ENCODE measurements at regions of chr2 and their contacts with region 1.

Region 1: GRCh38 chr2:234500394-234501006 is 3.6 kb upstream of the ARL4C start:
- DNase-seq: peak; percentile 65
- ATAC-seq: peak; percentile 27
- H3K4me3 ChIP-seq: no peak overlapping the region
- H3K27ac ChIP-seq: no peak overlapping the region
- H3K4me1 ChIP-seq: peaks cover 4% of the 10 kb centered on the region
- H3K27me3 ChIP-seq: no peaks in the 10 kb centered on the region
- CTCF ChIP-seq: peak; percentile 75
- POLR2A ChIP-seq: no peak
- RAD21 ChIP-seq: peak; percentile 90

Region 2: GRCh38 chr2:233976690-233977294 is 523.7 kb before region 1 on chr2:
- CTCF ChIA-PET with region 1: interaction called, 4 read pairs
- POLR2A ChIA-PET with region 1: no interaction called
- dilution Hi-C with region 1: no loop called
- in situ Hi-C with region 1: no loop called
- intact Hi-C with region 1: loop called (anchors 1 kb)
- DNase-seq: peak; percentile 76
- ATAC-seq: peak; percentile 59
- H3K4me3 ChIP-seq: no peak overlapping the region
- H3K27ac ChIP-seq: no peak overlapping the region
- H3K4me1 ChIP-seq: peaks cover 14% of the 10 kb centered on the region
- H3K27me3 ChIP-seq: no peaks in the 10 kb centered on the region
- CTCF ChIP-seq: peak; percentile 77
- POLR2A ChIP-seq: no peak
- RAD21 ChIP-seq: peak; percentile 87

Region 3: GRCh38 chr2:233982421-233983121 is 517.9 kb before region 1 on chr2:
- CTCF ChIA-PET with region 1: interaction called, 3 read pairs
- POLR2A ChIA-PET with region 1: no interaction called
- dilution Hi-C with region 1: no loop called
- in situ Hi-C with region 1: no loop called
- intact Hi-C with region 1: loop called (anchors 1 kb)
- DNase-seq: peak; percentile 94
- ATAC-seq: peak; percentile 92
- H3K4me3 ChIP-seq: no peak overlapping the region
- H3K27ac ChIP-seq: peak overlapping the region; percentile 65
- H3K4me1 ChIP-seq: peaks cover 7% of the 10 kb centered on the region
- H3K27me3 ChIP-seq: no peaks in the 10 kb centered on the region
- CTCF ChIP-seq: no peak
- POLR2A ChIP-seq: no peak
- RAD21 ChIP-seq: peak; percentile 24; the same call in 1 of the 2 replicates

Region 4: DNA sequence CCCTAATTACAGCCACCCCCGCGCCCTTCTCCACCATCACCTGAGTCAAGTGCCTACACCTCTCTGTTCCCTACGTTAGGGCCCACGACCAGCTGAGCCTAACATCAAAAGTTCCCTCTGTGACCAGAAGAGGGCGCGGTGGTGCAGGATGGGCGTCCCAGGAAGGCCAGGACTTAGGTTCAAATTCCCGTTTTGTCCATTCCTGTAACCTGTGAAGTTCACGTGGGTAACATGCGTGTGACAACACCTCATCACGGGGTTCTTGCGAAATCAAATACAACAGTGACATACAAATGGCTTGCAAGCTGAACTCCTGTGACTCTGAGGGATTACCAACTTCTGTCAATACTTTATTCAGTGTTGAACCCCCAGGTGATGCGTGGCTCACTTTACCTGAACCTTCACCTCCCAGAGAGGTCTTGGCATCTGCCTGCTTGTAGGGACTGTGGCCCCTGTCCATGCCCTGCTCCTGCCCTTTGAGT is 211.5 kb before region 1 on chr2:
- CTCF ChIA-PET with region 1: interaction called, 3 read pairs
- POLR2A ChIA-PET with region 1: interaction called, 3 read pairs
- dilution Hi-C with region 1: no loop called
- in situ Hi-C with region 1: loop called (anchors 10 kb)
- intact Hi-C with region 1: loop called (anchors 1 kb)
- DNase-seq: peak; percentile 41
- ATAC-seq: no peak
- H3K4me3 ChIP-seq: no peak overlapping the region
- H3K27ac ChIP-seq: no peak overlapping the region
- H3K4me1 ChIP-seq: peaks cover 18% of the 10 kb centered on the region
- H3K27me3 ChIP-seq: no peaks in the 10 kb centered on the region
- CTCF ChIP-seq: peak; percentile 65
- POLR2A ChIP-seq: no peak
- RAD21 ChIP-seq: peak; percentile 71

Region 5: GRCh38 chr2:234335661-234336228 is 164.8 kb before region 1 on chr2:
- CTCF ChIA-PET with region 1: no interaction called
- POLR2A ChIA-PET with region 1: no interaction called
- dilution Hi-C with region 1: loop called (anchors 25 kb)
- in situ Hi-C with region 1: no loop called
- intact Hi-C with region 1: no loop called
- DNase-seq: peak; percentile 72
- ATAC-seq: peak; percentile 92
- H3K4me3 ChIP-seq: no peak overlapping the region
- H3K27ac ChIP-seq: no peak overlapping the region
- H3K4me1 ChIP-seq: no peaks in the 10 kb centered on the region
- H3K27me3 ChIP-seq: peaks cover 22% of the 10 kb centered on the region
- CTCF ChIP-seq: no peak
- POLR2A ChIP-seq: no peak
- RAD21 ChIP-seq: 0 out of 2 replicates have a peak, but pooled peaks have one; percentile 5

Region 6: GRCh38 chr2:234368861-234369261 is 131.6 kb before region 1 on chr2:
- CTCF ChIA-PET with region 1: no interaction called
- POLR2A ChIA-PET with region 1: no interaction called
- dilution Hi-C with region 1: no loop called
- in situ Hi-C with region 1: no loop called
- intact Hi-C with region 1: loop called (anchors 10 kb)
- DNase-seq: peak; percentile 28
- ATAC-seq: peak; percentile 75
- H3K4me3 ChIP-seq: no peak overlapping the region
- H3K27ac ChIP-seq: no peak overlapping the region
- H3K4me1 ChIP-seq: no peaks in the 10 kb centered on the region
- H3K27me3 ChIP-seq: peaks cover 2% of the 10 kb centered on the region; the same call in 1 of the 2 replicates
- CTCF ChIP-seq: no peak
- POLR2A ChIP-seq: no peak
- RAD21 ChIP-seq: no peak

Region 7: GRCh38 chr2:234514873-234515638 is 14.6 kb after region 1 on chr2:
- CTCF ChIA-PET with region 1: no interaction called
- POLR2A ChIA-PET with region 1: no interaction called
- dilution Hi-C with region 1: no loop called
- in situ Hi-C with region 1: no loop called
- intact Hi-C with region 1: no loop called
- DNase-seq: no peak
- ATAC-seq: no peak
- H3K4me3 ChIP-seq: no peak overlapping the region
- H3K27ac ChIP-seq: no peak overlapping the region
- H3K4me1 ChIP-seq: peaks cover 3% of the 10 kb centered on the region; the same call in 1 of the 2 replicates
- H3K27me3 ChIP-seq: peaks cover 6% of the 10 kb centered on the region
- CTCF ChIP-seq: no peak
- POLR2A ChIP-seq: no peak
- RAD21 ChIP-seq: no peak

Region 8: DNA sequence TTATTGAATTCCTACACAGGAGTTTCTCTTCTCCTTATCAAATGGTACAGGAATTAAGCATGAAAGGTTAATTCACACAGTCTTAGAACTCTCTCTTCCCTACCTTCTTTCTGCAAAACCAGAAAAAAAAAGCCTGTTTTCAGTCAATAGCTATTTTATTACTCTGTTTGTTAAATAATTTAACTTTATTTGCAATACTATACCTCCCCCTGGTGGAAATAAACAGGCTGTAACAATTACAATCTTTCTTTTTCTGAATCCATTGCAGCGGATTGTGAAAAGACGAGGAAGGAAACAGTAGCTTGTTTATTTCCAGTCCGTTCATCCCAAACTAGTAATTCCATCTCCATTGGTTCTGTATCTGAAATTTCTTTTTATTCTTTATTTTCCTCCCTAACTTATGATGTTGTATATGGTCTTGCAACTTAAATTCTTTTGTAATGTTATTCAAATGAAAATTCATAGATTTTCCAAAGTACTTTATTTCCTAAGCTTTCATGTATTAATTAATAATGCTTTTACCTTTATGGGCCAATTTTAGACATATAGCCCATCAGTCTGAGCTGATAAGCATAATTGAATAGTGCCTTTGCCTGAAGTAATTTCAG is 616.5 kb after region 1 on chr2:
- CTCF ChIA-PET with region 1: no interaction called
- POLR2A ChIA-PET with region 1: no interaction called
- dilution Hi-C with region 1: no loop called
- in situ Hi-C with region 1: no loop called
- intact Hi-C with region 1: loop called (anchors 2 kb)
- DNase-seq: peak; percentile 48
- ATAC-seq: peak; percentile 69
- H3K4me3 ChIP-seq: no peak overlapping the region
- H3K27ac ChIP-seq: no peak overlapping the region
- H3K4me1 ChIP-seq: no peaks in the 10 kb centered on the region
- H3K27me3 ChIP-seq: peaks cover 4% of the 10 kb centered on the region
- CTCF ChIP-seq: peak; percentile 76
- POLR2A ChIP-seq: no peak
- RAD21 ChIP-seq: peak; percentile 74